Psoas muscle (tissue), 8 donors: ENCODE measurements at regions of chrX and their contacts with region 1.

Region 1: GRCh38 chrX:55342533-55343501 is 78.1 kb upstream of the PAGE3 start:
- DNase-seq: no peak
- ATAC-seq: peak in 3 of 4 donors; percentile 32 to 65 (median 56)
- H3K4me3 ChIP-seq: no peak overlapping the region
- H3K27ac ChIP-seq: no peak overlapping the region
- H3K4me1 ChIP-seq: no peaks in the 10 kb centered on the region
- H3K27me3 ChIP-seq: peaks cover 0 to 21% (median 0%) of the 10 kb centered on the region in 3 donors
- CTCF ChIP-seq: peak; percentile 51

Region 2: DNA sequence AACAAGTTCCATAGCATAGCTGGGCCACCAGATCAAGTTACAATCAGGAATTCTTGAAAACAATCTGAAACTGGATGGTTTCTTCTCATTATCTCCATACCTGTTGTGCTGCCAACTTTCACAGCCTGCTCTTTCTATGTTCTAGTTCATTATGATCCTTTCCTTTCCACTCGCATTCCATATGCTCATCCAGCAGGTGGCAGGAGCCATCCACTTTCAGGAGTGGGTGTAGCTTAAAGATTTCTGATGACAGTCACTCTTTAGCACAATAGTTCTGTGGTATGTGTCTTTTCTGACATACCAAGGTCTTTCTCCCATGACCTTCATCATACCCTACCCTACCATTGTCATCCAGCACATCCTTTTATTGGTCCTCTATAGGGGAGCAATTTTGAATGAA is 207.6 kb before region 1 on chrX:
- intact Hi-C with region 1: loop called in 1 of 2 experiments (anchors 10 kb)
- DNase-seq: peak; percentile 19 to 50
- ATAC-seq: peak in 2 of 4 donors; percentile 61 to 83
- H3K4me3 ChIP-seq: no peak overlapping the region
- H3K27ac ChIP-seq: no peak overlapping the region
- H3K4me1 ChIP-seq: no peaks in the 10 kb centered on the region
- H3K27me3 ChIP-seq: peaks cover 0 to 18% (median 0%) of the 10 kb centered on the region in 3 donors
- CTCF ChIP-seq: peak; percentile 51

Region 3: GRCh38 chrX:55742649-55743048 is 399.8 kb after region 1 on chrX:
- intact Hi-C with region 1: no loop called
- DNase-seq: no peak
- ATAC-seq: peak in 3 of 4 donors; percentile 37 to 66 (median 46)
- H3K4me3 ChIP-seq: no peak overlapping the region
- H3K27ac ChIP-seq: no peak overlapping the region
- H3K4me1 ChIP-seq: no peaks in the 10 kb centered on the region
- H3K27me3 ChIP-seq: peaks cover 0 to 3% (median 0%) of the 10 kb centered on the region in 3 donors
- CTCF ChIP-seq: no peak